CD8-positive, alpha-beta memory T cell (primary cell): ENCODE measurements at regions of chr2 and their contacts with region 1.

Region 1: GRCh38 chr2:18520451-18521425 is 39.7 kb downstream of the RDH14 start:
- DNase-seq: peak; percentile 51 to 78 (median 62)
- H3K4me3 ChIP-seq: no peak overlapping the region
- H3K4me3 Mint-ChIP-seq: no peak overlapping the region
- H3K27ac ChIP-seq: no peak overlapping the region
- H3K27ac Mint-ChIP-seq: peak overlapping the region in 1 of 8 donors; percentile 51
- H3K4me1 ChIP-seq: no peaks in the 10 kb centered on the region
- H3K4me1 Mint-ChIP-seq: no peaks in the 10 kb centered on the region
- H3K27me3 ChIP-seq: no peaks in the 10 kb centered on the region
- H3K27me3 Mint-ChIP-seq: peaks cover 14 to 32% of the 10 kb centered on the region in 2 donors

Region 2: GRCh38 chr2:18445433-18446320 is 75.1 kb before region 1 on chr2:
- CTCF ChIA-PET with region 1: no interaction called
- POLR2A ChIA-PET with region 1: no interaction called
- DNase-seq: no peak
- H3K4me3 ChIP-seq: no peak overlapping the region
- H3K4me3 Mint-ChIP-seq: no peak overlapping the region
- H3K27ac ChIP-seq: no peak overlapping the region
- H3K27ac Mint-ChIP-seq: peak overlapping the region in 1 of 8 donors; percentile 21
- H3K4me1 ChIP-seq: no peaks in the 10 kb centered on the region
- H3K4me1 Mint-ChIP-seq: no peaks in the 10 kb centered on the region
- H3K27me3 ChIP-seq: no peaks in the 10 kb centered on the region
- H3K27me3 Mint-ChIP-seq: peaks cover 3 to 35% of the 10 kb centered on the region in 2 donors

Region 3: GRCh38 chr2:19347619-19348562 is 827.2 kb after region 1 on chr2:
- CTCF ChIA-PET with region 1: interaction called, 10 read pairs
- POLR2A ChIA-PET with region 1: no interaction called
- DNase-seq: peak; percentile 92 to 99 (median 97)
- H3K4me3 ChIP-seq: peak overlapping the region; percentile 86
- H3K4me3 Mint-ChIP-seq: peak overlapping the region; percentile 92 to 98 (median 96)
- H3K27ac ChIP-seq: peak overlapping the region; percentile 90
- H3K27ac Mint-ChIP-seq: peak overlapping the region; percentile 97 to 99 (median 98)
- H3K4me1 ChIP-seq: peaks cover 44% of the 10 kb centered on the region
- H3K4me1 Mint-ChIP-seq: peaks cover 27 to 53% (median 30%) of the 10 kb centered on the region in 3 donors
- H3K27me3 ChIP-seq: peaks cover 41% of the 10 kb centered on the region
- H3K27me3 Mint-ChIP-seq: peaks cover 39 to 44% of the 10 kb centered on the region in 2 donors

Region 4: DNA sequence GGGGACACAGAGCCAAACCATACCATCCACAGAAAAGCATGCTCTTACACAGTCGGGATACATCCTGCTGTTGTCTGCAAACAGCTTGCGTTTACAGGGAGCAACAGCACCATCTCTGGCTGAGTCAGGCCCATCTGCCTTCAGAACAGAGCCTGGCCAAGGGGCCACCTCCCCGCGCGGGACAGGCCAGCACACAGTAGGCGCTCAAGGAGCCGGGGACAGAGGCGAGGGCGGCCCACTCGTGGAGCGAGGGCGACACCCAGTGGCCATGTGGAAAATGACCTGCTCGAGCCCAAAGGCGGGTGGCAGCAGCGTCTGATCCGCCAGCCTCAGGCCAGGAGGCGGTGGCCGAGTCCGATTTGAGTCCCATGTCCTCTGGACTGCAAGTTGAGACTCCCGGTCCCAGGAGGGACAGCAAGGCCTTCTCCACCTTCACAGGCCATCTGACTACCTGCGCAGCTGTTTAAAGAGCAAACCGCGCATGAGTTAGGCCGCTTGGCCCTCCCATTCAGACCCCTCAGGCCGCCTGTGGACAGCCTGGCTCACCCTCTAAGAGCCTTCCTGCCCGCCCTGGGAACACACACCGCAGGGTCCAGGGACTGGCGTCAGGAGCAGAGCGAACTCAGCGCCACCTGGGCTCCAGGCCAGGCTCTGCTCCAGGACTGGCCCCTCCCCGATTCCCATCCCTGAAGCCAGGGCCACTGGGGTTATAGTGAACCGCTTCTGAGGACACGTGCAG is 1342.7 kb after region 1 on chr2:
- CTCF ChIA-PET with region 1: interaction called, 61 read pairs
- POLR2A ChIA-PET with region 1: no interaction called
- DNase-seq: peak; percentile 55 to 70 (median 62)
- H3K4me3 ChIP-seq: no peak overlapping the region
- H3K4me3 Mint-ChIP-seq: no peak overlapping the region
- H3K27ac ChIP-seq: no peak overlapping the region
- H3K27ac Mint-ChIP-seq: peak overlapping the region in 2 of 8 donors; percentile 8 to 81
- H3K4me1 ChIP-seq: peaks cover 11% of the 10 kb centered on the region
- H3K4me1 Mint-ChIP-seq: peaks cover 7 to 17% (median 15%) of the 10 kb centered on the region in 3 donors
- H3K27me3 ChIP-seq: no peaks in the 10 kb centered on the region
- H3K27me3 Mint-ChIP-seq: peaks cover 1 to 8% of the 10 kb centered on the region in 2 donors

Region 5: DNA sequence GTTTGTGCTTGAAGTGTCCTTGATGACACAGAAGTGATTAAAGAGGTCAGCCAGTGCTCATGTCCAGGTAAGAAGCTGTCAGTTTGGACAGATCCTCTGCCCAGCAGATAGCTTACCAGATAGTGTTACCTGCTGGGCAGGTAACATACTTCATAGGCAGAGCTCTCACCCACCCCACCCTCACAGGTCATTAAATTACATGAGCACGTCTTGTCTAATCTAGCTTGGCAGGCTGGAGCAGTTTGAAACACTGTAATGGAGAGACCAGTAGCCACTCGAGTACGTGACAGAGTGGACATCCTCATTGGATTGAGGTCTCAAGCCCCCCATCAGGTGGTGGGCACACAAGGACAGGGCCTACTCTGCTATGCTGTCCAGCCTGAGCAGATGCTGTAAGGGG is 1354.0 kb after region 1 on chr2:
- CTCF ChIA-PET with region 1: interaction called, 13 read pairs
- POLR2A ChIA-PET with region 1: no interaction called
- DNase-seq: no peak
- H3K4me3 ChIP-seq: no peak overlapping the region
- H3K4me3 Mint-ChIP-seq: no peak overlapping the region
- H3K27ac ChIP-seq: no peak overlapping the region
- H3K27ac Mint-ChIP-seq: peak overlapping the region in 2 of 8 donors; percentile 27 to 43
- H3K4me1 ChIP-seq: peaks cover 3% of the 10 kb centered on the region
- H3K4me1 Mint-ChIP-seq: peaks cover 17 to 26% (median 20%) of the 10 kb centered on the region in 3 donors
- H3K27me3 ChIP-seq: no peaks in the 10 kb centered on the region
- H3K27me3 Mint-ChIP-seq: no peaks in the 10 kb centered on the region